Activated naive CD4-positive, alpha-beta T cell treated with anti-CD3 and anti-CD28 coated beads for 36 hours (primary cell): ENCODE measurements at regions of chr1 and their contacts with region 1.

Region 1: DNA sequence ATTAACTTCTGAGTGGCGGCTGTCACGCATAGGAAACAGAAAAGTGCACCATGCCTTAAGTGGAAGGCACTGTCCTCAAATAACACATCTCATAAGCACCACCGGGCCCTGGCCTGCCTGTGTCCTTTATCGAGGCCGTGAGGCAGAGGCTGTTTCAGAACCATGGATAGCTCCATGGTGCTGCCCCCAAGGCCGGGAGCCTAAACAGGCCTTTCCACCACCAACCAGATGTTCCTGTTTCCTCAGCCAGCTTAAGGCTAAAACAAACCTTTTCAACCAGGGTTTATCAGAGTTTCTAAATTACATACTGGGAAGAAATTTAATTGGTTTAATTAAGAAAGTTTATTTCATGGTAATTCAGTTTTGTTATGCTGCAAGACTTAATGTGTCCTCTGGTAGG is 114.4 kb downstream of the DMRTA2 start:
- DNase-seq: peak; percentile 41
- H3K4me3 Mint-ChIP-seq: no peak overlapping the region
- H3K27ac Mint-ChIP-seq: no peak overlapping the region
- H3K4me1 Mint-ChIP-seq: no peaks in the 10 kb centered on the region
- H3K27me3 Mint-ChIP-seq: peaks cover 8% of the 10 kb centered on the region

Region 2: GRCh38 chr1:50098591-50099021 is 210.3 kb before region 1 on chr1:
- CTCF ChIA-PET with region 1: no interaction called
- intact Hi-C with region 1: no loop called
- DNase-seq: no peak
- H3K4me3 Mint-ChIP-seq: no peak overlapping the region
- H3K27ac Mint-ChIP-seq: no peak overlapping the region
- H3K4me1 Mint-ChIP-seq: no peaks in the 10 kb centered on the region
- H3K27me3 Mint-ChIP-seq: peaks cover 2% of the 10 kb centered on the region

Region 3: DNA sequence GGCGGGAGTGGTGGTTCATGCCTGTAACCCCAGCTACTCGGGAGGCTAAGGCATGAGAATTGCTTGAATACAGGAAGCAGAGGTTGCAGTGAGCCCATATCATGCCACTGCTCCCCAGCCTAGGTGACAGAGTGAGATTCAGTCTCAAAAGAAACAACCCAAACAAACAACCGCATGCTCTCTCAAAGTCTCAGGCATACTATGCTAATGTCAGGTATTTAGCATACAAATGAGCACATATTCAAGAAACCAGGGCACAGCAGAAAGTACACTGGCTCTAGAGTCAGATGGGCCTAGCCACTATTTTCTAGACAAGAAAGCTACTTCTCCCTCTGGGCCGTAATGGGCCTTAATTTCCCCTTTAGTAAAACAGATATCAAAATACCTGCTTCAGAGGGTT is 145.2 kb before region 1 on chr1:
- CTCF ChIA-PET with region 1: no interaction called
- intact Hi-C with region 1: no loop called
- DNase-seq: no peak
- H3K4me3 Mint-ChIP-seq: no peak overlapping the region
- H3K27ac Mint-ChIP-seq: no peak overlapping the region
- H3K4me1 Mint-ChIP-seq: no peaks in the 10 kb centered on the region
- H3K27me3 Mint-ChIP-seq: no peaks in the 10 kb centered on the region

Region 4: GRCh38 chr1:50268049-50268448 is 40.8 kb before region 1 on chr1:
- CTCF ChIA-PET with region 1: no interaction called
- intact Hi-C with region 1: loop called (anchors 2 kb)
- DNase-seq: peak; percentile 20
- H3K4me3 Mint-ChIP-seq: no peak overlapping the region
- H3K27ac Mint-ChIP-seq: no peak overlapping the region
- H3K4me1 Mint-ChIP-seq: no peaks in the 10 kb centered on the region
- H3K27me3 Mint-ChIP-seq: peaks cover 8% of the 10 kb centered on the region